ENCODE measurements at regions of chr9 and their contacts with region 1.

Region 1: DNA sequence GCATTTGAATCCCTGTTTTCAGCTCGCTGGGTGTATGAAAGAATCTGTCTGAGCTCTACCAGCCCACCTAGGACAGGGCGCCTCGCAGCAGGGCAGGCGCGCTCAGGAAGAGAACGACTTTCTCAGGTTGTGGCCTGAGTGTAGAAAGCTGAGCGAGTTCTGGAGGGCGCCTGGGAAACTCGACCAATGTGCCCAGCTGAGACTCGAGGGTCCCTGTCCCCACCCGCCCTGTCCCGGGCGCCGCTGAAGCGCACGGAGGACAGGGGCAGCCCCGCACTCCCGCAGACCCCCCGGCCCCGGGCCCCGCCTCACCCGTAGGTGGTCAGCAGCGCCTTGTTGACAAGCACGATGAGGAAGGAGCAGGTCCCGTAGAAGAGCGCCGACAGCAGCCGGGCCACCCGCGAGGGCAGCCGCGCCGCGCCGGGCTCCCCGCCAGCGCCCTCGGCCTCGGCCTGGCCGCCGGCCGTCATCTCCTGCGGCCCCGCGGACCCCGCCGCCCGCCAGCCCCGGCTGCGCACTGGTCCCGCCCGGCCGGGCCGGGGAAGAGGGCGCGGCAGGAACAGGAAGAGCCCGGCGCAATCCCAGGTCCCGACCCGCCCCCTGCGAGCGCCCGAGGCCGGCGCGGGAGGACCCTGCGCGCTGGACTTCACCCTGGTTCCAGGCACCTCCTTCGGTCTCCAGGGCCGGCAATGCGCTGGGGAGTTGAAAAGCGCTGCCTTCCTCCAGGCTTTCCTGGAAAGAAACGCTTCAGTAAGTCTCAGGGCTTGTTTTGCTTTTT is at the start of gene SLC35D2:
- DNase-seq: peak; percentile 75
- H3K4me3 ChIP-seq: peak within 1 kb of the TSS; percentile 77 to 87 (median 80)
- H3K27ac ChIP-seq: peak within 1 kb of the TSS; percentile 86 to 88 (median 86)
- H3K4me1 ChIP-seq: peaks cover 0 to 25% (median 12%) of the 10 kb centered on the region in 4 donors
- H3K27me3 ChIP-seq: no peaks in the 10 kb centered on the region
- CTCF ChIP-seq: no peak
- EP300 ChIP-seq: no peak
- POLR2A ChIP-seq: no peak
- total RNA-seq, gene SLC35D2: 12.9 to 22.4 (median 16.4) TPM

Region 2: GRCh38 chr9:96299823-96300222 is 83.5 kb before region 1 on chr9:
- intact Hi-C with region 1: no loop called
- DNase-seq: no peak
- H3K4me3 ChIP-seq: no peak overlapping the region
- H3K27ac ChIP-seq: no peak overlapping the region
- H3K4me1 ChIP-seq: no peaks in the 10 kb centered on the region
- H3K27me3 ChIP-seq: no peaks in the 10 kb centered on the region
- CTCF ChIP-seq: no peak
- EP300 ChIP-seq: no peak
- POLR2A ChIP-seq: no peak

Region 3: DNA sequence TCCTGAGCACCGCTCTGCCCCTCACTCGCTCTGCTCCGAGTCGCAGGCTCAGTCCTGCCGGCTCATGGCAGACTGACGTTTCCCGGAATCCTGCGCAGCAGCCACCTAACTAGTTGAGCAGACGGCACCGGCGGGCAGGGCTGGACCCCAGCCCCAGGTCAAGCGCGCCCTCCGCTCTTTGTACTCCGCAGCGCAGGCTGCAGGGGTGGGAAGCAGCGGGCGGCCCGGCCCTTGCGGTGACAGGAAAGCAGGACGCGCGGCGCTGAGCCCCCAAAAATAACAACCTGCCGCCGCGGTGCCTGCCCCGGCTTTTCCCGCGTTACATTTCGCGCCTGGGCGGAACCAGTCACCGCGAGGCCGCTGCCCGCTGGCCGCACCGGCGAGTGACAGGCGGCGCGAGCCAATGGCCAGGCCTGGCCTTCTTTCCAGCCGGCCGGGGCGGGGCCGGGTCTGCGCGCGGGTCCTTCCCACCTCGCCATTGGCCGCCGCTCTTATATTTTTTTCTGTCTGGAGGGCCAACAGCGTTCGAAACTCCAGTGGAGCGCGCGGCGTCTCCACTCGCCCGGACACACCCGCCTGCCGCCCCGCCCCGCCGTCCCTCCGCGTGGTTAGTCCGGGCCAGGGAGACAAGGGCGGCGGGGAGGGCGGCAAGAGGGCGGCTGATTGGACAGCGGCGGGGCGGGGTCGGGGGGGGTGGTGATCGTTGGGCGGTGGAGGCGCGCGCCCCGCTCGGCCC is 34.9 kb after region 1 on chr9 and contains the start of gene ZNF367:
- intact Hi-C with region 1: loop called (anchors 2 kb)
- DNase-seq: peak; percentile 99
- H3K4me3 ChIP-seq: peak within 1 kb of the TSS; percentile 66 to 92 (median 82)
- H3K27ac ChIP-seq: peak within 1 kb of the TSS; percentile 98 to 100 (median 98)
- H3K4me1 ChIP-seq: peaks cover 0 to 37% (median 28%) of the 10 kb centered on the region in 4 donors
- H3K27me3 ChIP-seq: no peaks in the 10 kb centered on the region
- CTCF ChIP-seq: no peak
- EP300 ChIP-seq: no peak
- POLR2A ChIP-seq: no peak
- total RNA-seq, gene ZNF367: 0.28 to 1.4 (median 1.3) TPM